ENCODE measurements at regions of chr5 and their contacts with region 1.

Region 1: GRCh38 chr5:95554647-95555548 is at the starts of genes ARSK and SKIC3:
- DNase-seq: peak; percentile 92
- H3K4me3 Mint-ChIP-seq: peak within 1 kb of the TSS; percentile 87
- H3K27ac Mint-ChIP-seq: peak within 1 kb of the TSS; percentile 93
- H3K4me1 Mint-ChIP-seq: peaks cover 45% of the 10 kb centered on the region
- H3K27me3 Mint-ChIP-seq: no peaks in the 10 kb centered on the region
- total RNA-seq, gene ARSK: 4.5 to 5.1 TPM
- total RNA-seq, gene SKIC3: 67.4 to 69.5 TPM

Region 2: GRCh38 chr5:95283761-95284415 is 271.0 kb before region 1 on chr5:
- CTCF ChIA-PET with region 1: no interaction called
- intact Hi-C with region 1: loop called (anchors 10 kb)
- DNase-seq: peak; percentile 41
- H3K4me3 Mint-ChIP-seq: peak overlapping the region; percentile 45
- H3K27ac Mint-ChIP-seq: no peak overlapping the region
- H3K4me1 Mint-ChIP-seq: peaks cover 9% of the 10 kb centered on the region
- H3K27me3 Mint-ChIP-seq: peaks cover 33% of the 10 kb centered on the region

Region 3: GRCh38 chr5:95511606-95512005 is 43.3 kb before region 1 on chr5:
- CTCF ChIA-PET with region 1: no interaction called
- intact Hi-C with region 1: no loop called
- DNase-seq: no peak
- H3K4me3 Mint-ChIP-seq: no peak overlapping the region
- H3K27ac Mint-ChIP-seq: no peak overlapping the region
- H3K4me1 Mint-ChIP-seq: no peaks in the 10 kb centered on the region
- H3K27me3 Mint-ChIP-seq: no peaks in the 10 kb centered on the region

Region 4: DNA sequence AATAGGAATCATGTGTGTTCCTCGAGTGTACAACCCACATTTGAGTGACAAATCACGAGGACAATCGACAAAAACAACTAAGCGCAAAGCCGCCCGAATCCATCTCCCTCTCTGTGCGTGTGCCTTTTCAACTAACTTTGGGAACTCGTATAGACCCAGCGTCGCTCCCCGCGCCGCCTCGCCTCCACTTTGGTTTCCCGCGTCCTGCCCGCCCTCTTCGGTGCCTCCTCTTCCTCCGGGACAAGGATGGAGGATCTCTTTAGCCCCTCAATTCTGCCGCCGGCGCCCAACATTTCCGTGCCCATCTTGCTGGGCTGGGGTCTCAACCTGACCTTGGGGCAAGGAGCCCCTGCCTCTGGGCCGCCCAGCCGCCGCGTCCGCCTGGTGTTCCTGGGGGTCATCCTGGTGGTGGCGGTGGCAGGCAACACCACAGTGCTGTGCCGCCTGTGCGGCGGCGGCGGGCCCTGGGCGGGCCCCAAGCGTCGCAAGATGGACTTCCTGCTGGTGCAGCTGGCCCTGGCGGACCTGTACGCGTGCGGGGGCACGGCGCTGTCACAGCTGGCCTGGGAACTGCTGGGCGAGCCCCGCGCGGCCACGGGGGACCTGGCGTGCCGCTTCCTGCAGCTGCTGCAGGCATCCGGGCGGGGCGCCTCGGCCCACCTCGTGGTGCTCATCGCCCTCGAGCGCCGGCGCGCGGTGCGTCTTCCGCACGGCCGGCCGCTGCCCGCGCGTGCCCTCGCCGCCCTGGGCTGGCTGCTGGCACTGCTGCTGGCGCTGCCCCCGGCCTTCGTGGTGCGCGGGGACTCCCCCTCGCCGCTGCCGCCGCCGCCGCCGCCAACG is 65.4 kb after region 1 on chr5 and contains the start of gene GPR150:
- CTCF ChIA-PET with region 1: interaction called, 4 read pairs
- intact Hi-C with region 1: loop called (anchors 1 kb)
- DNase-seq: peak; percentile 69
- H3K4me3 Mint-ChIP-seq: peak within 1 kb of the TSS; percentile 82
- H3K27ac Mint-ChIP-seq: peak within 1 kb of the TSS; percentile 17
- H3K4me1 Mint-ChIP-seq: peaks cover 36% of the 10 kb centered on the region
- H3K27me3 Mint-ChIP-seq: no peaks in the 10 kb centered on the region
- total RNA-seq, gene GPR150: 0.64 to 0.94 TPM

Region 5: DNA sequence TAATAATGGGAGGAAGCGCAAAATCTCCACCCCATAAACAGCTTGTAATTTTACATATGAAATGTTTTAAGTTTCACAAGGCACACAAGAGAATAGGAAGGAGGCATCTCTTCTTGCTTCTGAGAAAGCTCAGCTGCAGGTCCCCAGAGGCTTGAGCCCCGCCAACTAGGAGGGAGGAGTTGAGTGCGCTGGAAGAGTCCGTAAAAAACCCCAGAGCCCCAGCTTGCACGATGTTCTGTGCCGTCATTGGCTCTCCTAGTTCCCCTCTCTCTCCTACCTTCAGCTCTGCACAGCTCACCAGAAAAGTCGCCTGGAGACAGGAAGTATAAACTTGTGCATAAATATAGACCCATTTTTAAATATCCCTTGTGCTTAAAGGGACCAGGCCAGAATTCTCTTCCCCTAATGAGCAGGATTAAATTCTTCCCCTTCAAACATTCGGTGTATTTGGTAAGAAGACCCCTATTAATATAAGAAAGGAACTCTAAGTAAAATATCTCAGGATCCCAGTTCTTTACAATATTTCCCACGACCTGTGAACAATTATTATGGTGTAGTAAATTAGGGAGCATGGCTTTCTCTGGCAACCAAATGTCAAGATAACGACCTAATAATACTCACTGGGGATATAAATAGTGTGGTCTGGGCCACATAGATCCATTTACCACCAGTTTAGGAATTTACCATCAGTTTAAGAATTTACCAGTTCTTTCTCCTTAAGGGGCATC is 254.0 kb after region 1 on chr5:
- CTCF ChIA-PET with region 1: no interaction called
- intact Hi-C with region 1: loop called (anchors 1 kb)
- DNase-seq: peak; percentile 92
- H3K4me3 Mint-ChIP-seq: peak overlapping the region; percentile 57
- H3K27ac Mint-ChIP-seq: peak overlapping the region; percentile 81
- H3K4me1 Mint-ChIP-seq: peaks cover 55% of the 10 kb centered on the region
- H3K27me3 Mint-ChIP-seq: no peaks in the 10 kb centered on the region

Region 6: GRCh38 chr5:97183100-97183929 is 1628.4 kb after region 1 on chr5 and contains the start of gene RIOK2:
- CTCF ChIA-PET with region 1: no interaction called
- intact Hi-C with region 1: loop called (anchors 1 kb)
- DNase-seq: peak; percentile 97
- H3K4me3 Mint-ChIP-seq: peak within 1 kb of the TSS; percentile 93
- H3K27ac Mint-ChIP-seq: peak within 1 kb of the TSS; percentile 99
- H3K4me1 Mint-ChIP-seq: peaks cover 33% of the 10 kb centered on the region
- H3K27me3 Mint-ChIP-seq: no peaks in the 10 kb centered on the region
- total RNA-seq, gene RIOK2: 29.1 to 32.0 TPM